ENCODE measurements at regions of chr3 and their contacts with region 1.

Region 1: DNA sequence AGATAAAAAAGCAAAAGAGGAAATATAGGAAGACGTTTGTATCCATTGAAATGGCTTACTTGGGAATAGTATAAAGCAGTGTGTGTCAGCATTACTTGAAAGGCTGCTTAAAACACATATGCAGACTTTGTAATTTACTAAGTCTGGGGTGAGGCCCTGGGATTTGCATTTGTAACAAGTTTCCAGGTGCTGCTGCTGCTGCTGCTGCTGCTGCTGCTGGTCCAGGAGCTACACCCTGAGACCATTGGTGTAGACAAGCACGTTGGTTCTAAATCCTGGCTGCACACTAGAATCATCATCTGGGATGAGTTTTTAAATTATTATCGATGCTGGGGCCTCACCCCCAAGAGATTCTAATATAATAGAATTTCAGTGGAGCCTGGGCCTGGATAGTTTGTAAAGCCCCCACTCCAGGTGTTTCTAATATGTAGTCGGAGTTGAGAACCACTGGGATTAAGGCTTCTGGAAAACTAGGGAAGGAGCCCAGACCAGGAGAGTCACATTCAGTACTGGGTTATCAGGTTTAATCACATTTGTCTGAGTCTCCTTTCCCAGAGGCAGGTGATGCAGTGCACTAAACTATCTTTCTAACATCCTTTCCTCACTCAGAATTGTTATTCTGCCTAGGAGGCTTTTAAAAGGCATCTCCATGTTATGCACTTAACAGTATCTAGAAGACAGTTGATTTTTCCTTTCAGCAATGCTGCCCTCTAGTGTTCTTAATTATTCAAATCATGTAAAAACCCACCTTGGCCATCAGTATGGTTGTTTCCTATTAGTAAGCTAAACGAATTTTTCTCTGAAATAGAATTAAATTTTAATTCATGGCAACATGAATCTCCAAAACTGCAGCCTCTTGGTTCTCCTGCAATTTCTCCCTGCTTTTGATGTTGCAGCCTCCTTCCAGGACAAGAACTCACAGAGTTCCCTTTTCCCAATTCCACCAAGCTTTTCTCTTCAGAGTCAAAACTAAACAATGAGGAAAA is 45.4 kb downstream of the SSR3 start:
- DNase-seq: no peak
- ATAC-seq: peak; percentile 82
- H3K4me3 Mint-ChIP-seq: no peak overlapping the region
- H3K27ac Mint-ChIP-seq: no peak overlapping the region
- H3K4me1 Mint-ChIP-seq: peaks cover 21% of the 10 kb centered on the region
- H3K27me3 Mint-ChIP-seq: no peaks in the 10 kb centered on the region
- CTCF ChIP-seq: peak; percentile 17; the same call in 1 of the 2 replicates

Region 2: GRCh38 chr3:156014489-156014888 is 495.0 kb before region 1 on chr3:
- CTCF ChIA-PET with region 1: interaction called, 18 read pairs
- POLR2A ChIA-PET with region 1: no interaction called
- DNase-seq: no peak
- ATAC-seq: no peak
- H3K4me3 Mint-ChIP-seq: no peak overlapping the region
- H3K27ac Mint-ChIP-seq: no peak overlapping the region
- H3K4me1 Mint-ChIP-seq: peaks cover 2% of the 10 kb centered on the region; the same call in 1 of the 2 replicates
- H3K27me3 Mint-ChIP-seq: no peaks in the 10 kb centered on the region
- CTCF ChIP-seq: no peak

Region 3: DNA sequence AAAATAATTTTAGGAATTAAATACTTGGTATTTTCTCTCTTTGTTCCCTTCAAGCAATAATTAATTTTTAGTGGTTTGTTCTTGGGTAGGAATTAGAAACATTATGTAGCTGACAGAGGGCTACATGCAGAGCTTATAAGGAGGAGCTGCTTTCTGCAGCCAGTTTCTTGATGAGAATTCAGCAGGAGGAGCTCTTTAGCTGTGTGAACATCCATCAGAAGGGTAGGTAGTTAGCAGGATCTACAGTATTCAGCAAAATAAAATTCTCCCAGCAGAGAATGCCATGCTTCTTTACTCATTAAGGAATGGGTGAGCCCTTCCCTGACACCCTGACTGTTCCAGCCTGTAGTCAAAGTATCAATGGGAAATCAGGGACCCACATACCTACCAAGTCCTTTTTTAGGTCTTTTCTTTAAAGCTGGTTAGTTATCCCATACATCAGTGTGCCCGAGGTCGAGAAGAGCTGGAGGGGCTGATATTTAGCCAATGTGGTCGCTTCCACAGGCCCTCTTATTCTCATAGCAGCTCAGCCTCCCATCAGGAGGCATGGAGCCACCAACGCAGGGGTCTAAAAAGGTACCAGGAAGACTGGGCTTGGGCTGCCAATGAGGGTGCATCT is 335.1 kb before region 1 on chr3:
- CTCF ChIA-PET with region 1: interaction called, 29 read pairs
- POLR2A ChIA-PET with region 1: no interaction called
- DNase-seq: no peak
- ATAC-seq: peak; percentile 71
- H3K4me3 Mint-ChIP-seq: no peak overlapping the region
- H3K27ac Mint-ChIP-seq: no peak overlapping the region
- H3K4me1 Mint-ChIP-seq: no peaks in the 10 kb centered on the region
- H3K27me3 Mint-ChIP-seq: no peaks in the 10 kb centered on the region
- CTCF ChIP-seq: no peak

Region 4: GRCh38 chr3:156404217-156404616 is 105.3 kb before region 1 on chr3:
- CTCF ChIA-PET with region 1: no interaction called
- POLR2A ChIA-PET with region 1: no interaction called
- DNase-seq: no peak
- ATAC-seq: no peak
- H3K4me3 Mint-ChIP-seq: no peak overlapping the region
- H3K27ac Mint-ChIP-seq: no peak overlapping the region
- H3K4me1 Mint-ChIP-seq: peaks cover 9% of the 10 kb centered on the region
- H3K27me3 Mint-ChIP-seq: no peaks in the 10 kb centered on the region
- CTCF ChIP-seq: no peak

Region 5: GRCh38 chr3:156449712-156450574 is 59.5 kb before region 1 on chr3:
- CTCF ChIA-PET with region 1: interaction called, 33 read pairs
- POLR2A ChIA-PET with region 1: no interaction called
- DNase-seq: peak; percentile 18
- ATAC-seq: peak; percentile 79
- H3K4me3 Mint-ChIP-seq: no peak overlapping the region
- H3K27ac Mint-ChIP-seq: no peak overlapping the region
- H3K4me1 Mint-ChIP-seq: peaks cover 2% of the 10 kb centered on the region; the same call in 1 of the 2 replicates
- H3K27me3 Mint-ChIP-seq: no peaks in the 10 kb centered on the region; the same call in 1 of the 2 replicates
- CTCF ChIP-seq: peak; percentile 40

Region 6: GRCh38 chr3:156492801-156493261 is 16.7 kb before region 1 on chr3:
- CTCF ChIA-PET with region 1: interaction called, 11 read pairs
- POLR2A ChIA-PET with region 1: no interaction called
- DNase-seq: no peak
- ATAC-seq: no peak
- H3K4me3 Mint-ChIP-seq: no peak overlapping the region
- H3K27ac Mint-ChIP-seq: no peak overlapping the region
- H3K4me1 Mint-ChIP-seq: no peaks in the 10 kb centered on the region
- H3K27me3 Mint-ChIP-seq: no peaks in the 10 kb centered on the region
- CTCF ChIP-seq: no peak

Region 7: GRCh38 chr3:156586905-156587759 is 77.7 kb after region 1 on chr3:
- CTCF ChIA-PET with region 1: no interaction called
- POLR2A ChIA-PET with region 1: no interaction called
- DNase-seq: no peak
- ATAC-seq: no peak
- H3K4me3 Mint-ChIP-seq: no peak overlapping the region
- H3K27ac Mint-ChIP-seq: no peak overlapping the region; the same call in 1 of the 2 replicates
- H3K4me1 Mint-ChIP-seq: no peaks in the 10 kb centered on the region
- H3K27me3 Mint-ChIP-seq: no peaks in the 10 kb centered on the region
- CTCF ChIP-seq: no peak